ENCODE measurements at regions of chr6 and their contacts with region 1.

Region 1: GRCh38 chr6:122789182-122790027 is at the start of gene SMPDL3A:
- DNase-seq: peak; percentile 11
- H3K4me3 Mint-ChIP-seq: peak within 1 kb of the TSS; percentile 93
- H3K27ac Mint-ChIP-seq: peak within 1 kb of the TSS; percentile 86
- H3K4me1 Mint-ChIP-seq: peaks cover 23% of the 10 kb centered on the region
- H3K27me3 Mint-ChIP-seq: peaks cover 59% of the 10 kb centered on the region
- total RNA-seq, gene SMPDL3A: 1.3 and 1.6 TPM in 2 replicates

Region 2: DNA sequence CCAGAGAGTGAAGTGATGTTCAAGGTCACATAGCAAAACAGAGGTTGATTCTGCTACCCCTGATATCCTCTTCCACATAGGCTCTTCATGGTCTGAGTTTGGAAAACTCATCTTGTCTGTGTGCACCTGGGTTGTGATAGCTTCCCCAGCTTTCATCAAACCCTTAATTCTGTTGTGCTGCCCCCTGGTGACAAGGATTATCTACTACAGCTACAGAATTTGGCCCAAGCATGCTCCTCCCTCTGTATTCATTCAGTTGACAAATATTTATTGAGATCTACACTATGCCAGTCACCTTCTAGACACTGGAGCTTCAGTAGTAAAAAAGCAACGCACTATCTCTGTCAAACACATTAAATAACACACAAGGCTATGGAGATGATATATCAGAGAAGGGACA is 50.1 kb after region 1 on chr6:
- intact Hi-C with region 1: loop called (anchors 5 kb)
- DNase-seq: peak; percentile 20
- H3K4me3 Mint-ChIP-seq: no peak overlapping the region
- H3K27ac Mint-ChIP-seq: no peak overlapping the region
- H3K4me1 Mint-ChIP-seq: no peaks in the 10 kb centered on the region
- H3K27me3 Mint-ChIP-seq: peaks cover 8% of the 10 kb centered on the region

Region 3: GRCh38 chr6:123016431-123017103 is 227.2 kb after region 1 on chr6:
- intact Hi-C with region 1: no loop called
- DNase-seq: no peak
- H3K4me3 Mint-ChIP-seq: no peak overlapping the region
- H3K27ac Mint-ChIP-seq: no peak overlapping the region
- H3K4me1 Mint-ChIP-seq: no peaks in the 10 kb centered on the region
- H3K27me3 Mint-ChIP-seq: no peaks in the 10 kb centered on the region

Region 4: GRCh38 chr6:123091091-123091895 is 301.9 kb after region 1 on chr6:
- intact Hi-C with region 1: no loop called
- DNase-seq: no peak
- H3K4me3 Mint-ChIP-seq: no peak overlapping the region
- H3K27ac Mint-ChIP-seq: no peak overlapping the region
- H3K4me1 Mint-ChIP-seq: no peaks in the 10 kb centered on the region
- H3K27me3 Mint-ChIP-seq: no peaks in the 10 kb centered on the region

Measured in activated T-helper 2 cell treated with anti-CD3 and anti-CD28 coated beads, Interferon-gamma antibody, Interleukin-2, Interleukin-4, amounts not matched to agents 10 μg/mL and 5 μg/mL and 100 μg/mL, durations not matched to agents 14 hours and 24 hours and 36 hours (primary cell).